ENCODE measurements at regions of chr13 and their contacts with region 1.

Region 1: DNA sequence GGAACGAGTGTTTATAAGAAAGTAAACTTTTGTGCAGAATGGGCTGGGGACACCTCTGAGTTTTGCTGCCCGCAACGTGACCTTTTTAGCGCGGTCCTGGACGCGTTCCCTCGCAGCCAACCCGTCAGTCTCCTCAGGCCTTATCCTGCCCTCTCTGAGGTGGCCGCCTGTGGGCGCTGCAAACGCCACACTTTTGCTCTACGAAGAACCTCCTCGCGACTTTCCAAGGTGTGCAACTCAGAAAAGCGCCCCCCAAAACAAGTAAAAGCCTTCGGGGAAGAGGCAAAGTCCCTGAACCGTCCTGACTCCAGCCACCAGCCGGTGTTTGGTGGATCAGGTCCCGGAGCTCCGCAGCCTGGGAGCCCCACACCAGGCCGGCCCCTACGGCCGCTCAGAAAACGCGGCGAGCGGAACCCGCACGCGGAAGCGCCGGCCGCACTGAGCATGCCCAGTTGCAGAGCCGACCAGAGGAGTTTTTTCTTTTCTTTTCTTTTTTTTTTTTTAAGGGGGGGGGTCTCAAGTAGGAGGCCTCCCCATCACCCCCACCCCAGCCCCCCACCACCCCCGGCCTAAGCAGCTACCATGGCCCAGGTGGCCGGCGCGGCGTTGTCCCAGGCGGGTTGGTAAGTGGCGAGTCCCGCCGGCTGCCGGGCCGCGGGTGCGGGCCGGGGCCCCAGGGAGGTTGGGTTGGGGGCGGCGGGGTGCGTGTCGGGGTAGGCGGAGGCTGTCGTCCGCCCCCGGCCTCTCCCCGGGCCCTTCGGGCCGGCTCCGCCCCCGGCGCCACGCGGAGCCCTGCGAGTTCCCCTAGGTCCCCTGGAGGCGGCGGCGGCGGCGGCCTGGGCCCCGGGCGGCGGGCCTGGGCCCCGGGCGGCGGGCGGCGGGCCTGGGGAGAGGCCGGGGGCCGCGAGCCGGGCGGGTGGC is at the start of gene TDRD3:
- DNase-seq: peak; percentile 67 to 90 (median 78)
- ATAC-seq: peak; percentile 70 to 76
- H3K4me3 Mint-ChIP-seq: peak within 1 kb of the TSS; percentile 90 to 98 (median 95)
- H3K27ac Mint-ChIP-seq: peak within 1 kb of the TSS; percentile 95 to 98 (median 97)
- H3K4me1 Mint-ChIP-seq: peaks cover 21 to 40% (median 38%) of the 10 kb centered on the region in 4 donors
- H3K27me3 Mint-ChIP-seq: no peaks in the 10 kb centered on the region
- polyA plus RNA-seq, gene TDRD3: 6.8 to 9.1 (median 8.3) TPM

Region 2: GRCh38 chr13:60411983-60412382 is 14.9 kb after region 1 on chr13:
- POLR2A ChIA-PET with region 1: interaction called, 11 read pairs
- DNase-seq: no peak
- ATAC-seq: no peak
- H3K4me3 Mint-ChIP-seq: peak overlapping the region in 1 of 10 donors; percentile 22
- H3K27ac Mint-ChIP-seq: peak overlapping the region in 2 of 10 donors; percentile 1 to 11
- H3K4me1 Mint-ChIP-seq: peaks cover 34 to 60% (median 54%) of the 10 kb centered on the region in 4 donors
- H3K27me3 Mint-ChIP-seq: no peaks in the 10 kb centered on the region

Measured in naive thymus-derived CD8-positive, alpha-beta T cell (primary cell).